A673 (cell line): ENCODE measurements at regions of chr1 and their contacts with region 1.

Region 1: GRCh38 chr1:105419030-105419429 is 1637.4 kb upstream of the PRMT6 start:
- DNase-seq: no peak
- H3K4me3 ChIP-seq: no peak overlapping the region
- H3K27ac ChIP-seq: no peak overlapping the region
- H3K4me1 ChIP-seq: no peaks in the 10 kb centered on the region
- H3K27me3 ChIP-seq: no peaks in the 10 kb centered on the region
- CTCF ChIP-seq: no peak

Region 2: DNA sequence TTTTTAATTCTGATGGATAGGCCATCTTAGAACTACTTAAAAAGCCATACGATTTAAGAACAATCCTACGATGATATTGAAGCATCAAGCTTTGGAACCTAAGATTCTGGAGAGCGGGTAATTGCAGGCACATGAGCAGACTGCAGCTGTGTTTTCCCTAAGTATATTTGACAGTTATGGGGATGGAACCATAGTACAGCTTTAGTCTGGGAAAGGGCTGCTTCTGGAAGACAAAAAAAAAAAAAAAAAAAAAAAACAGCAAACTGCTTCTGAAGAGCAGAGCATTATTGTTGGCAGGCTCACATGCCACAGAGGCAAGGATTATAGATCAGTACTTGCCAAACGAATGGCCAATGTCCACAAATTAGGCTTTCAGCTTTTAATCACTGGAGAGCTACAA is 50.6 kb before region 1 on chr1:
- CTCF ChIA-PET with region 1: no interaction called
- POLR2A ChIA-PET with region 1: interaction called, 15 read pairs
- intact Hi-C with region 1: no loop called
- DNase-seq: no peak
- H3K4me3 ChIP-seq: no peak overlapping the region
- H3K27ac ChIP-seq: no peak overlapping the region
- H3K4me1 ChIP-seq: no peaks in the 10 kb centered on the region
- H3K27me3 ChIP-seq: no peaks in the 10 kb centered on the region
- CTCF ChIP-seq: no peak